ENCODE measurements at regions of chr1 and their contacts with region 1.

Region 1: DNA sequence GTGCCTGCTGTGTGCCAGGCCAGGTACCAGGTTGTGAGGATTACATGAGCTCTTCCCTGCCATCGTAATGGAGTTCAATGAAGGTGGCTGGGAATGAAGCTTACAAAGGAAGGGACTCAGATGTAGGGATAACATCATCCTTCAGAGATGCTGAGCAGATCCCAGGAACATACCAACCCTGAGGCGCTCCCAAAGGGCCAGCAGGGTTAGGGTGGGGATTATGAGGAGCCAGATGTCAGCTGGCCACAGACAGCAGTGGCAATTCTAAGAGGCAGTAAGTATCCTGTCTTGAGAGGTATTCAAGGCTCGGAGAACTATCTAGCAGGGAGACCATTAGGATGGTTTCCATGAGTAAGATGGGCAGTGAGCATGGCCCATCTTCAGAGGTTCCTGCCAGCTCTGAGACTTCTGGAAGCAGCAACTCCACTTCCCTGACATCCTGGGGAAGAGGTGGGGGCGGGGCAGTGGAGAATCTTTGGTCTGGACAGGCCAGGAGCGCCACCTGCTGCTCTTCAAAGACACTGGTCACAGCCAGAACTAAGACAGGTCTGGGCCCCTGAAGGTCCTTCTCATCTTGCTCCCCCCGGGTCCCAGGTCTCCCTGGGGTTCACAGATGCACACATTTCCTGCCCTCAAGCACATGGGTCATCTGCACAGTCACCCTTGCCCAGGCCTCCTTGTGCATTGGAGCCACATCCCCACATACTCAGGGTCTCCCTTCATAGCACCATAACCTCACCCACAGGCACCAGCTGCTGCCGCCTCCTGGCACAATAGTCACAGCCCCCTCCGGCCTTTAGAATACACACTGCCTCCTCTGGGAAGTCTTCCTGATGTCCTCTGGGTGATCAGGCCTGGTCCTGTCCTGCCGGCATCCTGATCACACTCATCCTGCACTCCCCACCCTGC is 2.7 kb upstream of the SDC3 start:
- DNase-seq: peak; percentile 75
- H3K4me3 ChIP-seq: no peak overlapping the region
- H3K27ac ChIP-seq: no peak overlapping the region
- H3K4me1 ChIP-seq: peaks cover 6% of the 10 kb centered on the region
- H3K27me3 ChIP-seq: no peaks in the 10 kb centered on the region
- CTCF ChIP-seq: peak; percentile 81 to 88
- POLR2A ChIP-seq: no peak

Region 2: DNA sequence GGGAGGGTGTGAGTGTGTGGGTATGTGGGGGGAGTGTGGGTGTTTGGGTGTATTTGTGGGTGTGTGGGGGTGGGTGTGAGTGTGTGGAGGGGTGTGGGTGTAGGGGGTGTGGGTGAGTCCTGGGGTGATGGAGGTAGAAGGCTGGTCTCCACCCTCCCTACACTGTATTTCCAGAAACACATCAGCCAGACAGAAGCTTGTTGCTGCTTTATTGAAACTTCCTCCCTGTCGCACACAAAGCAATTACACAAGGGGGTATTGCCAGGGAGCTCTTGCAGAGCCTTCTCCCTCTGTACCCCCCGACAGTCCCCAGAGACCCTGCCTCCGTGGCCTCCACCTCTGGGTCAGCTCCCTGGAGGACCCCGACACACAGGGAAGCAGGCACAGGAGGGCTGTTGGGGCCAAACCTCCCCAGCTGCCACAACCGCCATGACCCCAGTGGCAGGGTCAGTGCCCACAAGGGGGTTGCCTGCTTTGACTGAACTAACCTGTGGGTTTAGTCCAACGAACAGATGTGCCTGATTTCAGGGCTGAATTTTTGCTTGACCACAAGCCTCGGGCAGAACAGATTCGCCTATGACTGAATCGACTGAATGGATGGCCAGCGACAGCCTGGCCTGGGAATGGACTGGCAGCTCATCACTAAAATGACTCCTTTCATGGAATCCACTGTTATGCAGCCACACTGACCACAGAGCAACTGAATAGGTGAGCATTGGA is 178.9 kb before region 1 on chr1:
- CTCF ChIA-PET with region 1: interaction called, 15 read pairs
- POLR2A ChIA-PET with region 1: no interaction called
- dilution Hi-C with region 1: no loop called
- intact Hi-C with region 1: no loop called
- DNase-seq: no peak
- H3K4me3 ChIP-seq: no peak overlapping the region
- H3K27ac ChIP-seq: no peak overlapping the region
- H3K4me1 ChIP-seq: no peaks in the 10 kb centered on the region
- H3K27me3 ChIP-seq: no peaks in the 10 kb centered on the region
- CTCF ChIP-seq: no peak
- POLR2A ChIP-seq: no peak

Region 3: DNA sequence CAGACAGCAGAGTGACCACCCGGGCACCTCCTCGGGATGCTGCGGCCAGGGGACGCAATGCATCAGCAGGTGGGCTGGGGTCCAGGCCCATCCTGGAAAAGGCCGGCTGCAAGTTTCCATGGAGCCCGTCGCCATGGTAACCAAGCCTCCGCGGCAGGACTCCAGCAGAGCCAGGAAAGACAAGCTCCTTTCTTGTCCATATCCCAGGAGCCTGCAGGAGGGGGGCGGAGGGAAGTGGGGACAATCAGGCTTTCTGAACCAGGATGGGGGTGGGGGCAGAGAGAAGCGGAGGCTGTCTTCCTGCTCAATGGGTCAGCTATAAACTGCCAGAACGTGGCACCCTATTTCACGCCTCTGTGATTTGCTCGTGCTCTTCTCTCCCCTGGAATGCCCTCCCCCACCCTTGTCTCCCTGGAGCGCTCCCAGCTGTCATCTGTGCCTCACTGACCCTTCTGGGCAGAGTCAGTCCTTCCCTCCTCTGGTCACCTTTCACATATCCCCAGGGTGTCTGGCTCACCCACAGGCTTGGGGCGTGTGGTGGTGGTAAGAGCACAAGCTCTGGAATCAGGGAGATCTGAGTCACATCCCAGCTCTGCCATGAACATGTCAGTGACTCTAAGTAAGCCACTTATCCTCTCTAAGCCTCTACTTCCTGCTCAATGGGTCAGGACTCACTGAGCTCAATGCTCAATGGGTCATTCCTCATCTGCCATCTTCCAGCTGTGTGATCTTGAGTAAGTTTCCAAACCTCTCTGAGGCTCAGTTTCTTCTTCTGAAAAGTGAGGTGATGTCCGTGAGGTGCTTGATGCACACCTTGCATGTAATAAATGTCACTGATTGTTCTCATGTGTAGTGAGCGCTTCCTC is 94.9 kb before region 1 on chr1:
- CTCF ChIA-PET with region 1: interaction called, 16 read pairs
- POLR2A ChIA-PET with region 1: no interaction called
- dilution Hi-C with region 1: loop called (anchors 25 kb)
- intact Hi-C with region 1: no loop called
- DNase-seq: no peak
- H3K4me3 ChIP-seq: no peak overlapping the region
- H3K27ac ChIP-seq: no peak overlapping the region
- H3K4me1 ChIP-seq: no peaks in the 10 kb centered on the region
- H3K27me3 ChIP-seq: peaks cover 8 to 20% of the 10 kb centered on the region in 2 experiments
- CTCF ChIP-seq: no peak
- POLR2A ChIP-seq: no peak

Region 4: GRCh38 chr1:30840904-30841598 is 70.2 kb before region 1 on chr1:
- CTCF ChIA-PET with region 1: interaction called, 18 read pairs
- POLR2A ChIA-PET with region 1: no interaction called
- dilution Hi-C with region 1: no loop called
- intact Hi-C with region 1: loop called (anchors 1 kb)
- DNase-seq: peak; percentile 95
- H3K4me3 ChIP-seq: no peak overlapping the region
- H3K27ac ChIP-seq: no peak overlapping the region
- H3K4me1 ChIP-seq: peaks cover 12% of the 10 kb centered on the region
- H3K27me3 ChIP-seq: peaks cover 68% of the 10 kb centered on the region in 2 experiments
- CTCF ChIP-seq: no peak
- POLR2A ChIP-seq: no peak

Region 5: GRCh38 chr1:31166462-31166861 is 255.2 kb after region 1 on chr1:
- CTCF ChIA-PET with region 1: no interaction called
- POLR2A ChIA-PET with region 1: no interaction called
- dilution Hi-C with region 1: no loop called
- intact Hi-C with region 1: no loop called
- DNase-seq: no peak
- H3K4me3 ChIP-seq: no peak overlapping the region
- H3K27ac ChIP-seq: no peak overlapping the region
- H3K4me1 ChIP-seq: peaks cover 5% of the 10 kb centered on the region
- H3K27me3 ChIP-seq: no peaks in the 10 kb centered on the region
- CTCF ChIP-seq: no peak
- POLR2A ChIP-seq: no peak